PC-9 (cell line): ENCODE measurements at regions of chr15 and their contacts with region 1.

Region 1: DNA sequence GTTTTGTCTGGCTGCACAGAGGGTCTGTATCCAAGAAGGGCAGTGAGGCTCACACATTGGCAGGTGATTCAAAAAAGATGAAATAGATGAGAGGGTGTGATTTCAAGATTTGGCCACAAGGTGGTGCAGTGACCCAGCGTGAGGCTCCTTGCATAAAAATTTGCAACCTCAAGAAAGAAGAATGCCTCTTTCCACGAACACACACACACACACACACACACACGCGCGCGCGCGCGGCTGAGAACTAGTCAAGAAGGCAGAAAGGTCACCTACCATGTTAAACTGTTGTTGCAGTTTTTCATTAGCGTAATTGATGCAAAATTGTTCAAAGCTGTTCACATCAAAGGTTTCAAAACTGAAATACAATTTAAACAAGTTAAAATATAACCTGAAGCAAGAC is 39.2 kb downstream of the MYO5C start:
- DNase-seq: peak in 1 of 2 experiments; percentile 55
- H3K4me3 ChIP-seq: no peak overlapping the region
- H3K27ac ChIP-seq: no peak overlapping the region
- H3K4me1 ChIP-seq: peaks cover 32% of the 10 kb centered on the region
- H3K27me3 ChIP-seq: no peaks in the 10 kb centered on the region
- CTCF ChIP-seq: peak; percentile 77

Region 2: GRCh38 chr15:52308446-52309153 is 52.2 kb after region 1 on chr15:
- CTCF ChIA-PET with region 1: no interaction called
- POLR2A ChIA-PET with region 1: interaction called, 14 read pairs
- intact Hi-C with region 1: no loop called
- DNase-seq: no peak
- H3K4me3 ChIP-seq: no peak overlapping the region
- H3K27ac ChIP-seq: no peak overlapping the region
- H3K4me1 ChIP-seq: 0 out of 2 replicates have a peak, but pooled peaks cover 5% of the 10 kb centered on the region
- H3K27me3 ChIP-seq: no peaks in the 10 kb centered on the region
- CTCF ChIP-seq: no peak

Region 3: DNA sequence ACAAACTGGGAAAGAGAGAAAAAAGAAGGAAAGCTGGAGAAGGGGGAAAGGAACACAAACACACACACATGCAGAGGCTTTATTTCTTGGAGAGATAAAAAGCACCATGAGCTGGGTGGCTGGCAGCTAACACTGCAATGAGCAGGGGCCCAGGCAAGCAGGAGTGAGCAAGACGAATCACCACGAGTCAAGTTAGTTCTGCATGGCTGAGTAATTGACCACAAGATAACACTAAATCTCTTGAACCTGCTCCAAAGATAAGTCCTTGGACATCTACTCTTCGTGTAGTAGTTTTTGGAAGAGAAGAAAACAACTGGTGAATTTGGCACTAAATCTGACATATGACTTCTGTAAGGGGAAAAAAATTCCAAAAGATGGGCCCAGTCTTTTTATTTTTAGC is 171.4 kb after region 1 on chr15:
- CTCF ChIA-PET with region 1: no interaction called
- POLR2A ChIA-PET with region 1: no interaction called
- intact Hi-C with region 1: no loop called
- DNase-seq: no peak
- H3K4me3 ChIP-seq: no peak overlapping the region
- H3K27ac ChIP-seq: no peak overlapping the region
- H3K4me1 ChIP-seq: no peaks in the 10 kb centered on the region
- H3K27me3 ChIP-seq: no peaks in the 10 kb centered on the region
- CTCF ChIP-seq: no peak

Region 4: GRCh38 chr15:52463638-52464037 is 207.3 kb after region 1 on chr15:
- CTCF ChIA-PET with region 1: interaction called, 5 read pairs
- POLR2A ChIA-PET with region 1: interaction called, 3 read pairs
- intact Hi-C with region 1: loop called (anchors 2 kb)
- DNase-seq: no peak
- H3K4me3 ChIP-seq: no peak overlapping the region
- H3K27ac ChIP-seq: no peak overlapping the region
- H3K4me1 ChIP-seq: no peaks in the 10 kb centered on the region
- H3K27me3 ChIP-seq: no peaks in the 10 kb centered on the region
- CTCF ChIP-seq: no peak

Region 5: DNA sequence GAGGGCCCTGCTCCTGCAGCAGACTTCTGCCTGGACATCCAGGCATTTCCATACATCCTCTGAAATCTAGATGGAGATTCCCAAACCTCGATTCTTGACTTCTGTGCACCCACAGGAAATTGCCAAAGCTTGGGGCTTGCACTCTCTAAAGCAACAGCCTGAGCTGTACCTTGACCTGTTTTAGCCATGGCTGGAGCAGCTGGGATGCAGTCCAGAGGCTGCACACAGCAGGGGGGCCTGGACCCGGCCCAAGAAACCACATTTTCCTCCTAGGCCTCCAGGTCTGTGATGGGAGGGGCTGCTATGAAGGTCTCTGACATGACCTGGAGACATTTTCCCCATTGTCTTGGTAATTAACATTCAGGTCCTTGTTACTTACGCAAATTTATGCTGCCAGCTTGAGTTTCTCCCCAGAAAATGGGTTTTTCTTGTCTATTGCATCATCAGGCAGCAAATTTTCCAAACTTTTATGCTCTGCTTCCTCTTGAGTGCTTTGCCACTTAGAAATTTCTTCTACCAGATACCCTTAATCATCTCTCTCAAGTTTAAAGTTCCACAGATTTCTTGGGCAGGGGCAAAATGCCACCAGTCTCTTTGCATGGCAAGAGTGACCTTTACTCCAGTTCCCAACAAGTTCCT is 284.1 kb after region 1 on chr15:
- CTCF ChIA-PET with region 1: no interaction called
- POLR2A ChIA-PET with region 1: interaction called, 11 read pairs
- intact Hi-C with region 1: no loop called
- DNase-seq: no peak
- H3K4me3 ChIP-seq: no peak overlapping the region
- H3K27ac ChIP-seq: no peak overlapping the region
- H3K4me1 ChIP-seq: no peaks in the 10 kb centered on the region
- H3K27me3 ChIP-seq: no peaks in the 10 kb centered on the region
- CTCF ChIP-seq: no peak

Region 6: GRCh38 chr15:52735231-52736089 is 479.1 kb after region 1 on chr15:
- CTCF ChIA-PET with region 1: interaction called, 3 read pairs
- POLR2A ChIA-PET with region 1: no interaction called
- intact Hi-C with region 1: loop called (anchors 1 kb)
- DNase-seq: peak; percentile 68 to 69
- H3K4me3 ChIP-seq: no peak overlapping the region
- H3K27ac ChIP-seq: no peak overlapping the region
- H3K4me1 ChIP-seq: peaks cover 13% of the 10 kb centered on the region
- H3K27me3 ChIP-seq: no peaks in the 10 kb centered on the region
- CTCF ChIP-seq: peak; percentile 84

Region 7: GRCh38 chr15:52745326-52746161 is 489.2 kb after region 1 on chr15:
- CTCF ChIA-PET with region 1: no interaction called
- POLR2A ChIA-PET with region 1: no interaction called
- intact Hi-C with region 1: no loop called
- DNase-seq: no peak
- H3K4me3 ChIP-seq: no peak overlapping the region
- H3K27ac ChIP-seq: no peak overlapping the region
- H3K4me1 ChIP-seq: no peaks in the 10 kb centered on the region
- H3K27me3 ChIP-seq: no peaks in the 10 kb centered on the region
- CTCF ChIP-seq: no peak